Gastrocnemius medialis (tissue), 4 donors: ENCODE measurements at regions of chr3 and their contacts with region 1.

Region 1: GRCh38 chr3:42443819-42444436 is 33.5 kb upstream of the LYZL4 start:
- DNase-seq: peak; percentile 56 to 58
- ATAC-seq: peak; percentile 82 to 96
- H3K4me3 ChIP-seq: no peak overlapping the region
- H3K27ac ChIP-seq: no peak overlapping the region
- H3K4me1 ChIP-seq: peaks cover 3 to 5% of the 10 kb centered on the region in 2 donors
- H3K27me3 ChIP-seq: no peaks in the 10 kb centered on the region
- CTCF ChIP-seq: peak; percentile 78 to 97 (median 87)
- POLR2A ChIP-seq: no peak

Region 2: DNA sequence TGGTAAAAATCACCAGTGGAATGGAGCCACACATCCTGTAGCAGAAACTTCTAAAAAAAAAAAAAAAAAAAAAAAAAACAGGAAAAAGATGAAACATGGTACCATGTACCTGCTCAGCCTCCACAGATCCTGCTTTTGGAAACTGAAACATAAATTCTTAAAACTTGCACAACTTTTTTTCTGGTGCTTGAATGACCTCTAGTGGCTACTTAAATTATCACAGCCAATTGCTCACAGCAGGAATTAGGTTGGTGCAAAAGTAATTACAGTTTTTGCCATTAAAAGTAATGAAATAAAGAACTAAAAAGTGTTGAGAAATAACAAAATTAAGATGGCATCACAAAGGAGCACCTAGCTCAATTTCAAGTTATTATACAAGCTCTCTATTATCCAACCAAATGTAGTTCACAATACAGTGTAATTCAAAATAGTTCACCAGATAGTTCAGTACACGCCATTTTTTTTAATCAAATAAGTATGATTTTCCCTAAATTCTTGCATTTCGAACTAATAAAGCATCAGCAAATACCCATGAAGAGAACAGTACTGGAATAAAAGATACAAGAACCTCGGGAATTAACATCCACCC is 562.6 kb before region 1 on chr3:
- in situ Hi-C with region 1: loop called in 1 of 4 experiments (anchors 25 kb)
- intact Hi-C with region 1: no loop called
- DNase-seq: no peak
- ATAC-seq: no peak
- H3K4me3 ChIP-seq: no peak overlapping the region
- H3K27ac ChIP-seq: no peak overlapping the region
- H3K4me1 ChIP-seq: no peaks in the 10 kb centered on the region
- H3K27me3 ChIP-seq: no peaks in the 10 kb centered on the region
- CTCF ChIP-seq: peak; percentile 52 to 73 (median 67)
- POLR2A ChIP-seq: no peak

Region 3: DNA sequence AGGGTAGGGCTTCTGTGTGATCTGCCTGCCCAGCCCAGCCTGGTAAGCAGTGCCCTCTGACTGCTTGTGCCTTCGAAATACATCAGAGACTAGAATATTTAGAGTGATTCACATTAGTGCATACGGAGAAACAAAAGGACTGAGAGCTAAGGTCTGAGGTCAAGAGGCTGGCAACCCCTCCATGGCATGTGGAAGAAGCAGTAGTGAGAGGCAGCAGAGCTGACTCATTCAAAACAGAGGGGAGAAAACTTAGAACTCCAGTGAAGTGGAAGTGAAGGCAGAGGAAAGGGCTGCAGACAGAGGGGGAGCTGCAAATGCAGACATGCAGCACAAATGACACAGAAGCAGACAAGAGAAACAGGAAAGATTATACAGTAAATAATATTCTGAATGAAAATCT is 543.7 kb before region 1 on chr3:
- in situ Hi-C with region 1: loop called in 3 of 4 experiments (anchors 25 kb)
- intact Hi-C with region 1: no loop called
- DNase-seq: no peak
- ATAC-seq: no peak
- H3K4me3 ChIP-seq: no peak overlapping the region
- H3K27ac ChIP-seq: no peak overlapping the region
- H3K4me1 ChIP-seq: no peaks in the 10 kb centered on the region
- H3K27me3 ChIP-seq: no peaks in the 10 kb centered on the region
- CTCF ChIP-seq: no peak
- POLR2A ChIP-seq: no peak

Region 4: DNA sequence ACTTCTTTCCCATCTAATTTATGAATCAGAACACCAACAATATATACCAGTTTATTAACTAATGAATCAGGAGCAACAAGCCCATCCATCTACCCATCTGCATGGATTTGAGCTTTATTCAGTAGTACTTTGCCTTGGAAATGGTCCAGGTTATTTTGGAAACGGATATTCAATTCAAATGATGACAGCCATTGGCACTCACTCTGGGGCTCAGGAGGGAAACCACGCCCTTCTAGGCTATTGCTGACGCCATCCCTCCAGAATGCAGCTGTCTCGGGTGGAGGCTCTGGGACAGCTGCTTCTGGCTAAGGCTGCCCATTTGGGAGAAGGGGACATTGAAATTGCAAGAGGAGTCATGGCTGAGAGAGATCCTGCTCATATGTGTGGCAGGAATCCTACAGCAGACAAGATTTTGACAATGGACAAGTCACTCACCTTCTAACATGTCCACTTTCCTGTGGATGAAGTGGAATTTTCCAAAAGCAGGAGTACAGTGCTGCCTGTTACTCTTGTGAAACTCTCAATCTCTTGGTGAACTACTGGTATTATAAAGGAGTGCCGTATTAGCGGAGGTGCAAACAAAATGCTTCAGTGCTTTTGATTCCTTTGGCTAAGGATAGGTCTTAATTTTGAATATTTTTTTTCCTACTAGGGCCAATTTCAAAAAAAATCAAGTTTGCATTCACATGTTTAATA is 382.1 kb before region 1 on chr3:
- in situ Hi-C with region 1: no loop called
- intact Hi-C with region 1: no loop called
- DNase-seq: peak; percentile 88 to 94
- ATAC-seq: peak; percentile 92 to 93
- H3K4me3 ChIP-seq: peak overlapping the region in 3 of 4 donors; percentile 17 to 41 (median 23)
- H3K27ac ChIP-seq: peak overlapping the region; percentile 88 to 94 (median 90)
- H3K4me1 ChIP-seq: peaks cover 84 to 85% of the 10 kb centered on the region in 2 donors
- H3K27me3 ChIP-seq: no peaks in the 10 kb centered on the region
- CTCF ChIP-seq: no peak
- POLR2A ChIP-seq: peak; percentile 27 to 61

Region 5: DNA sequence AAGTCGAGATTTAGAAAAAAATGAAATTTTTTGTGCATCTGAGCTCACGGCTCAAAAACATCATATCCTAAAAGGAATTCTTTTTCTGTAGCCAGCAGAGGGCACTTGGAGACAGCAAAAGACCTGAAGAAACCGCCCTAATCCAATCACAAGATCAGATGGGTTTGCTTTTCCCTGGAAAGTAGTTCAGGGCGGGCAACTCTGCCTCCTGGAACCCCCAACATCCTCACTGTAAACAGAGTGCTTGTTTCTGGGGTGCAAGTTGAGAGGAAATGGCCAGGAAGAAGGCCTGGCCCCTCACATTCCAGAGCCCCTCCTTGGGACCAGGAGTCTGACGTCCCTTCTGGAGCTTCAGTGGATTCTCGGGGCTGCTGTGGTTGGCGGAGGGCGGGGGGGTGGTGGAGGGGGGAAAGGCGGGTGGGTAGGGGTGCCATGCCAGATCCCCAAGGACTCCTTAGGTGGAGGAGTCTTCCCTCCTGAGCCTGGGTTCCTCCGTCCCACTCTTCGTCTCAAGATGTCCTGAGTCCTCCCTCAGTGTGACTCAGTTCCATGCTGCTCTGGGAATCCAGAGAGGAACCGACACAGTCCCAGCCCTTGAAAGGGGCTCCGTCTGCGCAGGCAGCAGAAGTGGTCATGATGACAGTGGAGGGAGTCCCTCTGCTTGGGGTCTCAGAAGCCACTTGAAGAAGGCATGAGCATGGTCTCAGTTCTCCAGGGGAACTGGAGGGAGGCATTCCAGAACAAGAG is 213.8 kb before region 1 on chr3:
- in situ Hi-C with region 1: loop called in 3 of 4 experiments (anchors 5 to 10 kb)
- intact Hi-C with region 1: loop called (anchors 1 kb)
- DNase-seq: no peak
- ATAC-seq: no peak
- H3K4me3 ChIP-seq: no peak overlapping the region
- H3K27ac ChIP-seq: no peak overlapping the region
- H3K4me1 ChIP-seq: peaks cover 18 to 20% of the 10 kb centered on the region in 2 donors
- H3K27me3 ChIP-seq: no peaks in the 10 kb centered on the region
- CTCF ChIP-seq: peak; percentile 38 to 61 (median 58)
- POLR2A ChIP-seq: no peak

Region 6: GRCh38 chr3:42256135-42256819 is 187.7 kb before region 1 on chr3:
- in situ Hi-C with region 1: loop called in 1 of 4 experiments (anchors 10 kb)
- intact Hi-C with region 1: no loop called
- DNase-seq: no peak
- ATAC-seq: no peak
- H3K4me3 ChIP-seq: no peak overlapping the region
- H3K27ac ChIP-seq: no peak overlapping the region
- H3K4me1 ChIP-seq: no peaks in the 10 kb centered on the region
- H3K27me3 ChIP-seq: peaks cover 0 to 14% (median 8%) of the 10 kb centered on the region in 3 donors
- CTCF ChIP-seq: no peak
- POLR2A ChIP-seq: no peak